A549 (cell line): ENCODE measurements at regions of chr15 and their contacts with region 1.

Region 1: DNA sequence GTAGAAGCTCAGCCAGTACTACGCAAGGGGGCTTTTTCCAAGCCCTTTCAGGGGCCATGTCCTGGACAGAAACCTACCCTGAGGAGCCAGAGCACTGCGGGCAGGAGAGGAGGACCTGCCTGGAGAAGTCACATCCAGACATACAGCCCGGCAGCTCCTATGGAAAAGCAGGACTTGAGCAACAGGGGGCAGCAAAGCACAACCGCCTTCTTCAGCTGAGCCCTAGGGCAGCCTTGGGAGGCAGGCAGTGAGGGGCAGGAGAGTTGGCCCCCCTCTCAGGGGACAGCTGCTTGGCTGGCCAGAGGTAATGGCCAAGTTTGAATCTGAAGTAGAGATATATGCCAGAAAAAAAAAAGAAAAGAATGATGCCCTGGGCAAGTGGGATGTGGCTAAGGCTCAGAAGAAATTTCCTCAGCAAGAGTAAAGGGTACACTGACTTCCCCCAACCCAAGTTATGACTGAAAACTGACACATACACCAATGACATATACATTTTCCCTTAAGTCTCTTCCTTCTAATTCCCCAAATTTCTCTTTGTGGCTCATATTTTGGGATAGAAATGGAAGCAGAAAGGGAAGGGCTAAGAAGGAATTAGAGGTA is 56.9 kb downstream of the CYP19A1 start:
- DNase-seq: peak; percentile 60 to 65
- ATAC-seq: peak; percentile 94 to 99; a peak in 5 of 6 replicates
- H3K4me3 ChIP-seq: no peak overlapping the region
- H3K27ac ChIP-seq: no peak overlapping the region
- H3K4me1 ChIP-seq: no peaks in the 10 kb centered on the region
- CTCF ChIP-seq: peak; percentile 70
- EP300 ChIP-seq: no peak
- POLR2A ChIP-seq: no peak
- RAD21 ChIP-seq: peak; percentile 80 to 85

Region 2: DNA sequence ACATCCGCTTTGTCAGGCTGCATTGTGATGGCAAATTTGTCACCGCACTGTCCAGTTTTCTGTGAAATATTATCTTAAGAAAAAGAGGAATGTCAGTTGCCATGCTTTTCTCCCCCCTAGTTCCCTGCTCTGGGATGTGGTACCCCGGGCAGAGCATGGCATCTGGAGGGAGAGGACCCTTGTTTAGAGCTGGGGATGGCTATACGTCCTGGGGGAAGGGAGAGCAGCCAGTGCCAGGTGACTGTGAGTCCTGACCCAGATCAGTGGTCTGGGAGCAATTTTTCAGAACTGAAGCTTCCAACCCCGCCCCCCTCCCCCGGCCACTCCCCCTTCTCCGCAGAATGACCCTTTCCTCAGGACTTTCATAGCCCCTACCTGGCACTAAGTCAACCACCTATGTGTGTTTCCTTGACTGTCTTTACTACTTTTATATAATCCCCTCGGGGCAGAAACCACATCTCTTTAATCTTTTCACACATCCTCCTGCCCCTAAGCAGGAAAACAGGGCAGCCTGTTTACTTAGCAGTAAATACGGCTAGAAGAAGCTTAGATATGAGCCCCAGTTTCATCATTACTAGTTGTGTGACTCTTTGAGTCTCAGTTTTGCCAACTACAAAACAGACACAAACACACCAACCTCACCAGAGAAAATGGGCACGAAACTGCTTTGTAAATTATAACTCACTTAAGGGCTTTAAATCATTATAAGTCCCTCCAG is 41.6 kb before region 1 on chr15:
- CTCF ChIA-PET with region 1: interaction called, 10 read pairs
- POLR2A ChIA-PET with region 1: no interaction called
- DNase-seq: no peak
- ATAC-seq: no peak
- H3K4me3 ChIP-seq: no peak overlapping the region
- H3K27ac ChIP-seq: no peak overlapping the region
- H3K4me1 ChIP-seq: 0 out of 3 replicates have a peak, but pooled peaks cover 4% of the 10 kb centered on the region
- CTCF ChIP-seq: no peak
- EP300 ChIP-seq: no peak
- POLR2A ChIP-seq: no peak
- RAD21 ChIP-seq: no peak

Region 3: GRCh38 chr15:51267703-51268083 is 13.8 kb before region 1 on chr15:
- CTCF ChIA-PET with region 1: interaction called, 11 read pairs
- POLR2A ChIA-PET with region 1: no interaction called
- DNase-seq: peak in 1 of 2 experiments; percentile 62
- ATAC-seq: peak; percentile 61 to 82; a peak in 4 of 6 replicates
- H3K4me3 ChIP-seq: peak overlapping the region; percentile 44
- H3K27ac ChIP-seq: peak overlapping the region in 1 of 2 experiments; percentile 65; a peak in 3 of 6 replicates
- H3K4me1 ChIP-seq: peaks cover 6% of the 10 kb centered on the region; the same call in 2 of the 3 replicates
- CTCF ChIP-seq: no peak
- EP300 ChIP-seq: no peak
- POLR2A ChIP-seq: no peak
- RAD21 ChIP-seq: no peak

Region 4: GRCh38 chr15:51312166-51313097 is 31.0 kb after region 1 on chr15:
- CTCF ChIA-PET with region 1: interaction called, 12 read pairs
- POLR2A ChIA-PET with region 1: no interaction called
- DNase-seq: no peak
- ATAC-seq: peak in 1 of 2 experiments; percentile 28; a peak in 1 of 6 replicates
- H3K4me3 ChIP-seq: no peak overlapping the region
- H3K27ac ChIP-seq: peak overlapping the region; percentile 6 to 34; a peak in 2 of 6 replicates
- H3K4me1 ChIP-seq: peaks cover 18% of the 10 kb centered on the region; the same call in 2 of the 3 replicates
- CTCF ChIP-seq: no peak
- EP300 ChIP-seq: no peak
- POLR2A ChIP-seq: no peak
- RAD21 ChIP-seq: no peak

Region 5: GRCh38 chr15:51425517-51426367 is 144.3 kb after region 1 on chr15:
- CTCF ChIA-PET with region 1: no interaction called
- POLR2A ChIA-PET with region 1: no interaction called
- DNase-seq: no peak
- ATAC-seq: no peak
- H3K4me3 ChIP-seq: no peak overlapping the region
- H3K27ac ChIP-seq: no peak overlapping the region
- H3K4me1 ChIP-seq: no peaks in the 10 kb centered on the region
- CTCF ChIP-seq: no peak
- EP300 ChIP-seq: no peak
- POLR2A ChIP-seq: no peak
- RAD21 ChIP-seq: no peak

Region 6: DNA sequence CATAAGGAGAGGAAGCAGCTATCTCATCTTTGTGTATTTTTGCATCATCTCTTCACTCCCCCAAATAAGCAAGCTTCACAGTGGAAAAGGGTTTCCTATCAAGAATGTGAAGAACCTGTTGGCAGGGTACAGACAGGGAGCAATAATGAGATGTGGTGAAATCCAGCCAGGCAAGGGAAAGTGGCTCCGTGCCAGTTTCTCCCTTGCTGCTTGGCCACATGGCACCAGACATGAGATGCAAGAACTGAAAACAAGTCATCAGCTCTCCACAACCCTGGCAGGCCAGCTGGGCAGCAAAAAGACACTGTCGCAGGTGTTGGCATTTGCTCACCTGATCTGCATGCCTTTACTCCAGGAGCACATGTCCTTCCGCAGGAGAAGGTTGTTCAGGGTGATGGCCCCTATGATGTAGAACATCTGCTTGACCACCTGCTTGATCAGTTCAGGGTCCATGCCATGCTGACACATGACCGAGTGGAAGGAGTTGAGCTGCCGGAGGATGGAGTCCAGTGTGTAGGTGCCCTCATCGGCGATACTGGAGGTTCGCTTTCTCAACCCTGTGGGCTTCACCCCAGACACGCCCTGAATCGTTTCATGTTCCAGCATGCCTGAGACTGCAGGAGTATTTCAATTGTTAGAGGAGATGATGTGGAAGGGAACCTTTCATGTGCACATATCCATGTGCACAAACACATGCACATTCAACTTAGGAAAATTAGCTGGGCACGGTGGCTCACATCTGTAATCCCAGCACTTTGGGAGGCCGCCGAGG is 1037.4 kb after region 1 on chr15:
- CTCF ChIA-PET with region 1: no interaction called
- POLR2A ChIA-PET with region 1: no interaction called
- DNase-seq: no peak
- ATAC-seq: no peak
- H3K4me3 ChIP-seq: no peak overlapping the region
- H3K27ac ChIP-seq: no peak overlapping the region
- H3K4me1 ChIP-seq: no peaks in the 10 kb centered on the region
- CTCF ChIP-seq: no peak
- EP300 ChIP-seq: no peak
- POLR2A ChIP-seq: no peak
- RAD21 ChIP-seq: no peak